Dendritic cell treated with granulocyte-macrophage colony-stimulating factor and Interleukin-4, amounts not matched to agents 40 ng/mL and 50 ng/mL, for 4 days (primary cell): ENCODE measurements at regions of chr12 and their contacts with region 1.

Region 1: GRCh38 chr12:89862511-89863179 is 154.0 kb upstream of the ATP2B1 start:
- H3K4me3 Mint-ChIP-seq: no peak overlapping the region
- H3K27ac Mint-ChIP-seq: peak overlapping the region; percentile 97
- H3K4me1 Mint-ChIP-seq: peaks cover 72% of the 10 kb centered on the region
- H3K27me3 Mint-ChIP-seq: no peaks in the 10 kb centered on the region

Region 2: DNA sequence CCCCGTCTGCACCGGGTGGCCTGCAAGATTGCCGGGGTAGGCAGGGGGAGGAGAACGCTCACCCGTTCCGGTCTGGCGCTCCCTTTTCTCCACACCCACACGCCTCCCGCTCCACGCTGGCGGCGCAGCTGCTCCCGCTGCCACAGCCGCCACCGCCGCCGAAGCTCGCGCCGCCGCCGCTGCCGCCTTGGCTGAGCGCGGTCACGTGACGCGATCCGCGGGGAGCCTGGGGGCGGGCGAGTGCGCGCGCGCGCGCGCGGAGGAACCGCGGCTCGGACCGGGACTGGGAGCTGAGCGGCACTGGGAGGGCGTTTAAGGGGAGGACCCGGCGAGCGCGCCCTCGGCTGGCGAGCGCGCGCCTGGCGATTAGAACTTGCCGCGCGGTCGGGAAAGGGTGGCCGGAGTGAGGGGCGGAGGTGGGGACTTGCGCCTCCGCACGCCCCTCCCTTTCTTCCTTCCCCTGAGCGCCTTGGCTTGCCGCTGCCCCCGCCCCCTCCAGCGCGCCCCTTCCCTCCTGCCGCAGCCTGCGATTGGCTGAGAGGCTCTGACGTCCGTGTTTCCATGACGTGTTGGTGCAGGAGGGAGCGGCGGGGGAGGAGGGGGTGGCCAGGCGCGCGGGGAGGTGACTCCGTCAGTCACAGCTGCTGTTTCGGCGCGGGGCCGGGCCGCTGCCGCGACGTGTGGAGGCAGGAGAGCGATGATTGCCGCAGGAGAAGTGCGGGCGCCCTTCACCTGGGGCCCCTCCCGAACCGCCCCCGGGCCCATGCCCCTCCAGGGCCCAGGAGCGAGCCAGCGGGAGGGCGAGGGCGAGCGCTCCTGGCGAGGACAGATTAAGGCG is 153.3 kb before region 1 on chr12:
- intact Hi-C with region 1: loop called (anchors 1 kb)
- H3K4me3 Mint-ChIP-seq: peak overlapping the region; percentile 82
- H3K27ac Mint-ChIP-seq: peak overlapping the region; percentile 100
- H3K4me1 Mint-ChIP-seq: peaks cover 15% of the 10 kb centered on the region
- H3K27me3 Mint-ChIP-seq: no peaks in the 10 kb centered on the region

Region 3: GRCh38 chr12:89756585-89757321 is 105.9 kb before region 1 on chr12:
- intact Hi-C with region 1: loop called (anchors 1 kb)
- H3K4me3 Mint-ChIP-seq: peak overlapping the region; percentile 14
- H3K27ac Mint-ChIP-seq: peak overlapping the region; percentile 95
- H3K4me1 Mint-ChIP-seq: peaks cover 43% of the 10 kb centered on the region
- H3K27me3 Mint-ChIP-seq: no peaks in the 10 kb centered on the region

Region 4: DNA sequence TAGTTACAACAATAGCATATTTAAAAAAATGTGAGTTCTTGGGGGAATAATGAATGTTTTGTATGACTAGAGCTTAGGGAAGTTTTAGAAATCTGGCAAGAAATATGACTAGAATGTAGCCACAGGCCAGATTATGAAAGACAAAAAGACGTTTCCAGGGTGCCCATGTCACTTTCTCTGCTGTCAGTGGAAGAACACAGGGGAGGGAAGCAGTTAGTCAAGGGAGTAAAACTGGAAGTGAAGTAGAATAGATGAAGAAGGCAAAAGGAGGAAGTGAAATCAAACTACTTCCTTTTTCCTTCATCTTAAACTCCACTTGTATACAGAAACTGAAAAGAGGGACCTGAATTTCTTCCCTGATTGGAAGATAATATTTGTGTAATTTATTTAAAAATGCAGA is 72.8 kb before region 1 on chr12:
- intact Hi-C with region 1: loop called (anchors 2 kb)
- H3K4me3 Mint-ChIP-seq: no peak overlapping the region
- H3K27ac Mint-ChIP-seq: peak overlapping the region; percentile 75
- H3K4me1 Mint-ChIP-seq: peaks cover 32% of the 10 kb centered on the region
- H3K27me3 Mint-ChIP-seq: no peaks in the 10 kb centered on the region

Region 5: DNA sequence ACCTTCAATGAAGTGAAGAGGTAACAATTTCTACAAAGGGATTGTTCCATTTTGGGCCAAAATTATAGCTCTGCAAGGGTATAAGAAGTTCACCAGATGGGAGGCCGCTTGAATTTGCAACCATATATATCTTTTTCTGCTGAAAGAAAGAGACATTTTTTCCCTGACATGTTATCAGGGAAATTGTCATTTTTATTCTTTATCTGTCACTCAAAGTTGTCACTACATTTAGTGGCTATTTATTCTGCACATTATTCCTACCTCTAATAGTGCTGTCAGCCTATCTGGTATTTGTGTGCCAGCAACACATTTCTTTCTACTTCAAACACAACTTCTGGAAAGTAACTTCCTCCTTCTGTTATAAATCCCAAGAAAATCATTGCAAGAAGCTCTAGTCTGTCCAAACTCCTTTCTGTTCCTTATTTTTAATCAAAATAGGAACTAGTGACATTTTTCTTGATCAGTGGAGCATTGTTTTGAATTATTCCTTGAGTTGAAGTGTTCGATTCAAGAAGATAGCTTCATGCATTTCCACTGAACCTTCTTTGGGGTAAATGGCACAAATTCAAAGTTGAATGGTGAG is 16.1 kb before region 1 on chr12:
- intact Hi-C with region 1: loop called (anchors 2 kb)
- H3K4me3 Mint-ChIP-seq: no peak overlapping the region
- H3K27ac Mint-ChIP-seq: peak overlapping the region; percentile 86
- H3K4me1 Mint-ChIP-seq: peaks cover 49% of the 10 kb centered on the region
- H3K27me3 Mint-ChIP-seq: no peaks in the 10 kb centered on the region

Region 6: GRCh38 chr12:89880690-89881350 is 18.2 kb after region 1 on chr12:
- intact Hi-C with region 1: loop called (anchors 2 kb)
- H3K4me3 Mint-ChIP-seq: no peak overlapping the region
- H3K27ac Mint-ChIP-seq: peak overlapping the region; percentile 74
- H3K4me1 Mint-ChIP-seq: peaks cover 31% of the 10 kb centered on the region
- H3K27me3 Mint-ChIP-seq: no peaks in the 10 kb centered on the region

Region 7: DNA sequence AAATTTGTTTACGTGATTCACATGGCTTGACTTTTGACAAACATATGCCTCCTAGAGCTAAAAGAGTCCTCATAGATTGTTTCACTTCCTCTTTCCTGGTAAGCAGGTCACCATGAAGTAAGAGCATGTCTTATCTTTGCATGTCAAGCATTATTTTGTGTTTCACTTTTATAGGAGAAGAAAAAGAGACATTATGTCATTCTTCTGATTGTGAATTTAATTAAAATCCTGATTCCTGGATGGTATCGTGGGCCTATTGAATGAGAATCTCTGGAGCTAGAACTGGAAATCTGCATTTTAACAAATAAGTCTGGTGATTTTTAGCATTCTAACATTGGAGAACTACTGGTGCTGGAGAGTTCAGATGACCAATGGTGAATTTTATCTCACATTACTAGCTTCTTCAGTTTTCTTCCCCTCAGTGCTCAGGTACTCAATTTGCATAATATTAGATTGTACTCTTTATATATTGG is 64.6 kb after region 1 on chr12:
- intact Hi-C with region 1: loop called (anchors 2 kb)
- H3K4me3 Mint-ChIP-seq: peak overlapping the region; percentile 40
- H3K27ac Mint-ChIP-seq: peak overlapping the region; percentile 83
- H3K4me1 Mint-ChIP-seq: peaks cover 4% of the 10 kb centered on the region
- H3K27me3 Mint-ChIP-seq: no peaks in the 10 kb centered on the region